Right ventricle myocardium inferior (tissue), 1 donor: ENCODE measurements at regions of chr5 and their contacts with region 1.

Region 1: DNA sequence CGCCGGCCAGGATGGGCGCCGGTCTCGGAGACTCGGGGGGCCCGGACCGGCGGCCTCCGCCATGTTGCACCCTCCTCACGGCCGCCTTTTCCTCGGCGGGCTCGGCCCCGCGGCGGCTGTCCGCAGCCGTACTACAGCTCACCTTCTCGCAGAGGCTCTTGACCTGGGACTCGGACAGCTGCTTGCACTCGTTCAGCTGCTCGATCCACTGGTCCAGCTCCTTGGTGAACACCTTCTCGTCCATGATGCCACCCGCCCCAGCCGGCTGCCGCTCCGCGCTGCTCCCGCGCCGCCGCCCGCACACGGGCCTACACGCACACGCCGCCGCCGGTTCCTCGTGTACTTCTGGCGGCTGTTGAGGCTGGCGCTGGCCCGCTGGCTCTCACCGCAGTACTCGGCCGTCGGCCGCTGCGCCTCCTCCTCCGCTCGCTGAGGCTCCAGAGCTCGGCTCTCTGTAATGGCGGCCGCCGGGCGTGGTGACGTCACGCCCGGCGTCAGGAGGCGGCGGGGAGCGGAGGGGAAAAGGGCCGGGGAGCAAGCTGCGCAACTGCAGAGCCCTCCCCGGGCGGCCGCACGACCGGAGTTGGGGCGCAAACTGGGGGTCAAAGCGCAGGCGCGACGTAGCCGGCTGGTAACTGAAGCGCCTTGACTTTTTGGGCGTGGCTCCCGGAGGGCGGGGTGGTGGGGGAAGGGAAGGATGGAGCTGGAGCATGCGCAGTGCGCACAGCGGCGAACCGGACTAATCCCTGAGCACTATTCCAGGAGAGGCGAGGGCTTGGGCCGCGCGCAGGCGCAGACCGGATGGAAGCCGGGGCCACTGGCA is at the start of gene PPP2CA:
- DNase-seq: peak; percentile 99
- ATAC-seq: peak; percentile 97
- total RNA-seq, gene PPP2CA: 149 TPM

Region 2: GRCh38 chr5:134176511-134177368 is 49.1 kb before region 1 on chr5 and contains the start of gene SKP1:
- intact Hi-C with region 1: loop called (anchors 5 kb)
- DNase-seq: peak; percentile 94
- ATAC-seq: peak; percentile 92
- total RNA-seq, gene SKP1: 458 TPM